CD4-positive, alpha-beta memory T cell (primary cell): ENCODE measurements at regions of chr20 and their contacts with region 1.

Region 1: GRCh38 chr20:3767427-3768341 is at the start of gene ADISSP:
- DNase-seq: peak; percentile 93 to 96 (median 95)
- H3K4me3 ChIP-seq: peak within 1 kb of the TSS; percentile 69 to 90
- H3K4me3 Mint-ChIP-seq: peak within 1 kb of the TSS; percentile 86 to 94 (median 90)
- H3K27ac ChIP-seq: peak within 1 kb of the TSS; percentile 98
- H3K27ac Mint-ChIP-seq: peak within 1 kb of the TSS; percentile 96 to 99 (median 98)
- H3K4me1 ChIP-seq: peaks cover 25% of the 10 kb centered on the region
- H3K4me1 Mint-ChIP-seq: peaks cover 9 to 27% (median 17%) of the 10 kb centered on the region in 4 donors
- H3K27me3 ChIP-seq: no peaks in the 10 kb centered on the region
- H3K27me3 Mint-ChIP-seq: peaks cover 0 to 2% of the 10 kb centered on the region in 2 donors
- total RNA-seq, gene ADISSP: 15.7 to 17.3 TPM

Region 2: GRCh38 chr20:3374296-3374695 is 393.4 kb before region 1 on chr20:
- CTCF ChIA-PET with region 1: no interaction called
- POLR2A ChIA-PET with region 1: no interaction called
- intact Hi-C with region 1: no loop called
- DNase-seq: no peak
- H3K4me3 ChIP-seq: no peak overlapping the region
- H3K4me3 Mint-ChIP-seq: no peak overlapping the region
- H3K27ac ChIP-seq: no peak overlapping the region
- H3K27ac Mint-ChIP-seq: no peak overlapping the region
- H3K4me1 ChIP-seq: no peaks in the 10 kb centered on the region
- H3K4me1 Mint-ChIP-seq: no peaks in the 10 kb centered on the region
- H3K27me3 ChIP-seq: no peaks in the 10 kb centered on the region
- H3K27me3 Mint-ChIP-seq: no peaks in the 10 kb centered on the region

Region 3: GRCh38 chr20:3679749-3680700 is 87.7 kb before region 1 on chr20:
- CTCF ChIA-PET with region 1: interaction called, 5 read pairs
- POLR2A ChIA-PET with region 1: no interaction called
- intact Hi-C with region 1: loop called (anchors 1 kb)
- DNase-seq: no peak
- H3K4me3 ChIP-seq: no peak overlapping the region
- H3K4me3 Mint-ChIP-seq: peak overlapping the region in 1 of 8 donors; percentile 31
- H3K27ac ChIP-seq: no peak overlapping the region
- H3K27ac Mint-ChIP-seq: no peak overlapping the region
- H3K4me1 ChIP-seq: no peaks in the 10 kb centered on the region
- H3K4me1 Mint-ChIP-seq: peaks cover 3 to 9% (median 7%) of the 10 kb centered on the region in 4 donors
- H3K27me3 ChIP-seq: peaks cover 7% of the 10 kb centered on the region
- H3K27me3 Mint-ChIP-seq: peaks cover 38 to 48% of the 10 kb centered on the region in 2 donors

Region 4: GRCh38 chr20:3781153-3781910 is 13.6 kb after region 1 on chr20 and contains the start of gene SPEF1:
- CTCF ChIA-PET with region 1: interaction called, 27 read pairs
- POLR2A ChIA-PET with region 1: interaction called, 49 read pairs
- intact Hi-C with region 1: loop called (anchors 1 kb)
- DNase-seq: peak; percentile 57 to 67 (median 64)
- H3K4me3 ChIP-seq: peak within 1 kb of the TSS in 1 of 2 donors; percentile 18
- H3K4me3 Mint-ChIP-seq: peak within 1 kb of the TSS; percentile 35 to 82 (median 78)
- H3K27ac ChIP-seq: peak within 1 kb of the TSS; percentile 31
- H3K27ac Mint-ChIP-seq: peak within 1 kb of the TSS; percentile 5 to 91 (median 78)
- H3K4me1 ChIP-seq: peaks cover 52% of the 10 kb centered on the region
- H3K4me1 Mint-ChIP-seq: peaks cover 26 to 61% (median 43%) of the 10 kb centered on the region in 4 donors
- H3K27me3 ChIP-seq: no peaks in the 10 kb centered on the region
- H3K27me3 Mint-ChIP-seq: peaks cover 1% of the 10 kb centered on the region in 2 donors
- total RNA-seq, gene SPEF1: not detected

Region 5: DNA sequence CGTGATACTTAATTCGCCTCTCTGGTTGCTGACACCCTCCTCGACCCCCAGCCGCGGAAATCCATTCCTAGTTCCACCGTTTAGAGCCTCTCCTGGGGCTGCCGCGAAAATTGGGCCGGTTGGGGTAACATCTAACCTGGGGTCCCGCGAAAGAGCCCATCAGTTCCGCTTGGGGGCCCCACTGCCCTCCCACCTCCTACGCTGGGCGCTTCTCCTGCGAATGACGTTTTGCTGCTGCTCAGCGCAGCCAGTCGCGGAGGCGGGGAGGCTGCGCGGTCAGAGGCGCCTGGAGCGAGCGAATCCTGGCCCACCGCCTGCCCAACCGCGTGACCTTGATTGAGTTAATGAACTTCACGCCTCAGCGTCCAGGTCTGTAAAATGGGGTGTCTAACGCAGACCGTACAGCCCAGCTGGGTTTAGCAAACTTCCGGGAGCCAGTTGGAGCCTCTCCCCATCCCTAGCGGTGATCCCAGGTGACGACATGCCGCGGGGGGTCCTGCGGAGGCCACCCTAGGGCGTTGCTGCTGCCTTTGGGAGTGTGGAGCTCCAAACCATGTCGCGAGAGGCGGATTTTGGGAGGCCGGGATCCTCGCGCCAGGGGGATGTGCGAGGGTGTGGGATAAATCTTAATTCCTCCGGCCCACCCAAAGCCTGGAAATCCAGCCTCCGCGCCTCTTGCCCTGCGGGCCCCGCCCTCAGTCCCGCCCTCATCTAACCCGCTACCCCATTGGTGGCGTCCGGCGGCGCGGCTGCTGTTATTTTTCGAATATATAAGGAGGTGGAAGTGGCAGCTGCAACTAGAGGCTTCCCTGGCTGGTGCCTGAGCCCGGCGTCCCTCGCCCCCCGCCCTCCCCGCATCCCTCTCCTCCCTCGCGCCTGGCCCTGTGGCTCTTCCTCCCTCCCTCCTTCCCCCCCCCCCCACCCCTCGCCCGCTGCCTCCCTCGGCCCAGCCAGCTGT is 28.1 kb after region 1 on chr20 and contains the start of gene CDC25B:
- CTCF ChIA-PET with region 1: interaction called, 3 read pairs
- POLR2A ChIA-PET with region 1: interaction called, 19 read pairs
- intact Hi-C with region 1: loop called (anchors 2 kb)
- DNase-seq: peak; percentile 83 to 94 (median 85)
- H3K4me3 ChIP-seq: peak within 1 kb of the TSS; percentile 94 to 97
- H3K4me3 Mint-ChIP-seq: peak within 1 kb of the TSS; percentile 98 to 100 (median 100)
- H3K27ac ChIP-seq: peak within 1 kb of the TSS; percentile 86
- H3K27ac Mint-ChIP-seq: peak within 1 kb of the TSS; percentile 95 to 99 (median 97)
- H3K4me1 ChIP-seq: peaks cover 38% of the 10 kb centered on the region
- H3K4me1 Mint-ChIP-seq: peaks cover 21 to 54% (median 35%) of the 10 kb centered on the region in 4 donors
- H3K27me3 ChIP-seq: no peaks in the 10 kb centered on the region
- H3K27me3 Mint-ChIP-seq: no peaks in the 10 kb centered on the region
- total RNA-seq, gene CDC25B: 410 to 420 TPM

Region 6: DNA sequence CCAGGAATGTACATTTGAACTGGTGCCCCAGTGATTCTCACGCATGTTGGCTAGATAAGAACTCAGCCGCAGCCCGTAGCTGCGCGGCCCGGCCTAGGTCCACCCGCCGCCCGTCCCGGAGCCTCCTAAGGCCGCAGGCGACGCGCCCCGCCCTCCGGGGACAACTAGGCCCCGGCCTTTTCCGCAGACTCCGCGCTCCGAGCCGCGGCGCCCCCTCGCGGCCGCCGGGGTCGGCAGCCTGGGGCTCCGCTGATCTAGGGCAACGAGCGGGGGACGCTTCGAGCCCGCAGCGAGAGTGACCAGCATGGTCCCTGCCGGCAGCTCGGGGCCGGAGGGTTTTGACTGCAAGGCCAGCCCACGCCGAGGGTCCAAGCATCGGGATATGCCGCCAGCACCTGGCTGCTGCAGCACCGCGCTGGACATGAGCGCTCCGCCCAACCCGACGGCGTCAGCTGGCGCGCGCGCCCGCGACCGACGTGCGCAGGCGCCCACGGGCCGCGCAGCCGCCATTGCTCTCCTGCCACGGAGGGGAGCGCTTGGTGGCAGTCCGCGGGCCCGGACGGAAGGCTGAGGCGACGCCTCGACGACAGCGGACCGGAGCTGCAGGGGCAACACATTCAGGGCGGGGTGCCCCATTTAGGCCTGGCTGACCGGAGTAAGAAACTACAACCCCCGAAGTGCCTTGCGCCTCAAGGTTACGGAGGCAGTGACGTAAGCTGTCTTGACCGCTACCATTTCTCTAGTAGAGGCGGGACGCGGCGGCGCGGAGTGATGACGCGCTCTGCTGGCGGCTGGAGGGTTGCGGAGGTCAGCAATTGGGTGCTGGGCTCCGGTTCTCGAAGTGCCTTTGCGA is 52.6 kb after region 1 on chr20 and contains the start of gene AP5S1:
- CTCF ChIA-PET with region 1: interaction called, 33 read pairs
- POLR2A ChIA-PET with region 1: interaction called, 73 read pairs
- intact Hi-C with region 1: loop called (anchors 1 kb)
- DNase-seq: peak; percentile 90 to 97 (median 91)
- H3K4me3 ChIP-seq: peak within 1 kb of the TSS; percentile 78 to 88
- H3K4me3 Mint-ChIP-seq: peak within 1 kb of the TSS; percentile 83 to 94 (median 91)
- H3K27ac ChIP-seq: peak within 1 kb of the TSS; percentile 99
- H3K27ac Mint-ChIP-seq: peak within 1 kb of the TSS; percentile 96 to 99 (median 99)
- H3K4me1 ChIP-seq: peaks cover 53% of the 10 kb centered on the region
- H3K4me1 Mint-ChIP-seq: peaks cover 30 to 66% (median 50%) of the 10 kb centered on the region in 4 donors
- H3K27me3 ChIP-seq: no peaks in the 10 kb centered on the region
- H3K27me3 Mint-ChIP-seq: no peaks in the 10 kb centered on the region
- total RNA-seq, gene AP5S1: 10.4 to 11.1 TPM

Region 7: GRCh38 chr20:4014031-4014474 is 246.4 kb after region 1 on chr20:
- CTCF ChIA-PET with region 1: no interaction called
- POLR2A ChIA-PET with region 1: interaction called, 3 read pairs
- intact Hi-C with region 1: loop called (anchors 5 kb)
- DNase-seq: peak; percentile 41 to 57 (median 45)
- H3K4me3 ChIP-seq: peak overlapping the region in 1 of 2 donors; percentile 1
- H3K4me3 Mint-ChIP-seq: peak overlapping the region; percentile 83 to 96 (median 92)
- H3K27ac ChIP-seq: no peak overlapping the region
- H3K27ac Mint-ChIP-seq: peak overlapping the region; percentile 71 to 98 (median 92)
- H3K4me1 ChIP-seq: peaks cover 32% of the 10 kb centered on the region
- H3K4me1 Mint-ChIP-seq: peaks cover 14 to 40% (median 31%) of the 10 kb centered on the region in 4 donors
- H3K27me3 ChIP-seq: no peaks in the 10 kb centered on the region
- H3K27me3 Mint-ChIP-seq: no peaks in the 10 kb centered on the region